AG04449 (cell line): ENCODE measurements at regions of chr18 and their contacts with region 1.

Region 1: GRCh38 chr18:45879681-45880655 is 54.5 kb downstream of the SIGLEC15 start:
- DNase-seq: no peak
- H3K4me3 ChIP-seq: no peak overlapping the region
- CTCF ChIP-seq: peak; percentile 100

Region 2: DNA sequence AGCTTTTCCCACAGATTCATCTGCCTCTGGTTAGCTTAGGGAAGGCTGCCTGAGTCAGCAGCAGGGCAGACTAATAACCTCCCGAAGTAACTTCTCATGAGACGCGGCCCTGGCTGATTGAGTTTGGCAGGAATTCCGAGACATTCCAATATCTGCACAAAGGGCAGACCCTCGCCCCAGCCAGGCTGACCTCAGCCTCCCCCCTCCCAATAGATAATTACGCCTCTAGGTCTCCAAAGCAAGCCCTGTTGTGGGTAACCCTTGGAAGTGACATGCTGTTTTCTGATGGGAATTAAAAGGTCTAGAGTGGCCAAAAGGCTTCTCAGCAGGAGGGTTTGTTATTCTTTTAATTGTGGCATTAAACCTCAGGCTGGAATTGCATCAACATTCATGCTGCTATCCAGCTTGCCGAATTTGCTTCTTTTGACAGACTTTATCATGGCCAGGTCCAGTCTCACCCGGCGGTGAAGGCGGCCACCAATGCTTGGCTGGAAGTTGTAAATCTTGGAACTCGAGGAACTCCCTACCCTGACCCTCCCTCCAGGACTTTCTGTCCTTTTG is 362.7 kb before region 1 on chr18:
- CTCF ChIA-PET with region 1: no interaction called
- POLR2A ChIA-PET with region 1: no interaction called
- DNase-seq: no peak
- H3K4me3 ChIP-seq: no peak overlapping the region
- CTCF ChIP-seq: no peak

Region 3: GRCh38 chr18:45576931-45577330 is 303.0 kb before region 1 on chr18:
- CTCF ChIA-PET with region 1: no interaction called
- POLR2A ChIA-PET with region 1: no interaction called
- DNase-seq: no peak
- H3K4me3 ChIP-seq: no peak overlapping the region
- CTCF ChIP-seq: no peak

Region 4: DNA sequence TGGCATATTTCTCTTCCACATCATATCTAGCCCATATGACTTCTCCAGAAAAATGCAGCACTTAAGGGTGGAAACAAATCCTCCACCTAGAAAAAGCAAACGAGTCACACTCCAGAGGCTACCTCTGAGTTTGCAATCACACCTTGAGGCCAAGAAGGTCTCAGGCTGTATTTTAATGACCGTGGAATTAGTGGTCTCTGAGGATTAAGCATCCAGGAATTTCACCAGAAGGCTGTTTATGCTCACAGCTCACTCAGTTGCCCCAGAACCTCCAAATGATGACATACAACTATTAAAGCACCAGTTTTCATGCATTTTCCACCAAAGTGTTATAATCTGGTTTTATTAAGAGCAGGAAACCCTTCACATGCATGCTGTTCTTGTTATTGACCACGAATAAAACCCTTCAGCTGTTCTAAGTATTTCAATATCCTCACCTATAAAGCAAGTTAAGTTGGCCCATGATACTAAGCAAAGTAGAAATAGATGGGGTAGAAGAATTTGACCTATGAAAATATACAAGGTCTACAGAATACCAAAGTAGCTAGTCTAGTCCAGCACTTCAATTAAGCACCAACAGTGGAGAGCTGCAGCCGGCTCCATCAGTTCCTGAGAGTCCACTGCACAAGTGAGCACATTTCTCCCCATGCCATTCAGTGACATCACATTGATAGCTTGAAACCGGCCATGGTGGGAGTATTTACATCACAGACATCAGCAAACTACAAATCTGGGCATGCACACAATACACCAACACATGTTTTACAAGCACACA is 195.4 kb before region 1 on chr18:
- CTCF ChIA-PET with region 1: interaction called, 226 read pairs
- POLR2A ChIA-PET with region 1: no interaction called
- DNase-seq: no peak
- H3K4me3 ChIP-seq: no peak overlapping the region
- CTCF ChIP-seq: no peak

Region 5: GRCh38 chr18:45722899-45723298 is 157.1 kb before region 1 on chr18:
- CTCF ChIA-PET with region 1: interaction called, 80 read pairs
- POLR2A ChIA-PET with region 1: no interaction called
- DNase-seq: no peak
- H3K4me3 ChIP-seq: no peak overlapping the region
- CTCF ChIP-seq: peak; percentile 95

Region 6: GRCh38 chr18:45856531-45856930 is 23.4 kb before region 1 on chr18:
- CTCF ChIA-PET with region 1: interaction called, 202 read pairs
- POLR2A ChIA-PET with region 1: no interaction called
- DNase-seq: peak; percentile 42
- H3K4me3 ChIP-seq: no peak overlapping the region
- CTCF ChIP-seq: no peak

Region 7: GRCh38 chr18:45910405-45911023 is 30.5 kb after region 1 on chr18:
- CTCF ChIA-PET with region 1: interaction called, 46 read pairs
- POLR2A ChIA-PET with region 1: interaction called, 3 read pairs
- DNase-seq: no peak
- H3K4me3 ChIP-seq: no peak overlapping the region
- CTCF ChIP-seq: peak; percentile 82